OCI-LY7 (cell line): ENCODE measurements at regions of chr2 and their contacts with region 1.

Region 1: DNA sequence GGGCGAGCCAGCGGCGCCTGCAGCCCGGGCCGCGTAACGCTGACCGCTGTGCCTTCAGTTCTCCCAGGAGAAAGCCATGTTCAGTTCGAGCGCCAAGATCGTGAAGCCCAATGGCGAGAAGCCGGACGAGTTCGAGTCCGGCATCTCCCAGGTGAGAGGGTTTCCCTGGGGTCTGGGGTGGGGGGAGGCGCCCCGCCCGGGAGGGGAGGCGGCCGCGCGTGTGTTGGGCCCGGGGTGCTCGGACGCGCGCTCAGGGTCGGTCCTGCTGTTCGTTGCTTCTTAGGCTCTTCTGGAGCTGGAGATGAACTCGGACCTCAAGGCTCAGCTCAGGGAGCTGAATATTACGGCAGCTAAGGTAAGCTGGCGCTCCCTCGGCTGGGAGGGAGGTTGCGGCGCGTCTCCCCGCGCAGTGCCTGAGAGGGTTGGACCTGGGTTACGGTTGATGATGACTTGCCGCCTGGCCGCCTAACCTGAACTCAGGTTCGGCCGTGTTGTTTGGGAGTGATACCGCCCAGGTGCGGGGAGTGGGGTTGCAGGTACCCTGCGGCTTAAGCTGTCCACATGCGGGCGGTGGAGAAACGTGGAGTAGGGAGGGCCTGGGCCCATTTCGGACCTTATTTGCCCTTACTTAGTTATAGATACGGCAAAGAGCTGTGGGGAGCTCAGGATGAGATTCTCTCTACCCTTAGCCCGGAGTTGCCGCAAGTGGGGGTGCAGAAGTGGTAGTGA is 638 bp downstream of the RPS7 start:
- DNase-seq: peak; percentile 42
- H3K4me3 ChIP-seq: peak overlapping the region; percentile 82
- H3K27ac ChIP-seq: peak overlapping the region; percentile 66
- H3K4me1 ChIP-seq: peaks cover 49% of the 10 kb centered on the region
- CTCF ChIP-seq: no peak

Region 2: GRCh38 chr2:3034856-3035255 is 540.8 kb before region 1 on chr2:
- CTCF ChIA-PET with region 1: no interaction called
- POLR2A ChIA-PET with region 1: no interaction called
- intact Hi-C with region 1: no loop called
- DNase-seq: peak; percentile 11
- H3K4me3 ChIP-seq: no peak overlapping the region
- H3K27ac ChIP-seq: no peak overlapping the region
- H3K4me1 ChIP-seq: no peaks in the 10 kb centered on the region
- CTCF ChIP-seq: no peak

Region 3: DNA sequence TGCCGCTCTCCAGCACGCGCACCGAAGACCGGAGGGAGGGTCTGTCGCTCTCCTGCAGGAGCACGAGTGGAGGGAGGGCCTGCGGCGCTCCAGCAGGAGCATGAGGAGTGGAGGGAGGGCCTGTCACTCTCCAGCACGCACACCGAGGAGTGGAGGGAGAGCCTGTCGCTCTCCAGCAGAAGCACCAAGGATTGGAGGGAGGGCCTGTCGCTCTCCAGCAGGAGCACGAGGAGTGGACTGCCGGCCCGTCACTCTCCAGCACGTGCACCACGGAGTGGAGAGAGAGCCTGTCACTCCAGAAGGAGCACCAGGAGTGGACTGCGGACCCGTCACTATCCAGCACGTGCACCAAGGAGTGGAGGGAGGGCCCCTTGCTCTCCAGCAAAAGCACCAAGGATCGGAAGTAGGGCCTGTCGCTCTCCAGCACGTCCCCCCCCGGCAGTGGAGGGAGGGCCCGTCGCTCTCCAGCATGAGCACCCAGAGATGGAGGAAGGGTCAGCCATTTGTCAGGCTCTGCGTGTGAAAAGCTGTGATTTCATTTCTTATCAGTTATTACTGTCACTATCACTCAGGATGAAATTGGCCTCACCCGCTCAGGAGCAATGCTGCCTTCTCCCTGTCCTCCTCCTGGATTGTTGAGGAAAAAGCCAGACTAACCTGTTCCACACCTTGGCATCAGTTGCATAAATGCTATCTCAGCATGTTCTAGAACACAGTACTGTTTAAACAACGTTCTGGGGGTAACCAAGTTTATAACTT is 92.3 kb before region 1 on chr2:
- CTCF ChIA-PET with region 1: no interaction called
- POLR2A ChIA-PET with region 1: no interaction called
- intact Hi-C with region 1: no loop called
- DNase-seq: no peak
- H3K4me3 ChIP-seq: no peak overlapping the region
- H3K27ac ChIP-seq: no peak overlapping the region
- H3K4me1 ChIP-seq: peaks cover 23% of the 10 kb centered on the region
- CTCF ChIP-seq: no peak

Region 4: DNA sequence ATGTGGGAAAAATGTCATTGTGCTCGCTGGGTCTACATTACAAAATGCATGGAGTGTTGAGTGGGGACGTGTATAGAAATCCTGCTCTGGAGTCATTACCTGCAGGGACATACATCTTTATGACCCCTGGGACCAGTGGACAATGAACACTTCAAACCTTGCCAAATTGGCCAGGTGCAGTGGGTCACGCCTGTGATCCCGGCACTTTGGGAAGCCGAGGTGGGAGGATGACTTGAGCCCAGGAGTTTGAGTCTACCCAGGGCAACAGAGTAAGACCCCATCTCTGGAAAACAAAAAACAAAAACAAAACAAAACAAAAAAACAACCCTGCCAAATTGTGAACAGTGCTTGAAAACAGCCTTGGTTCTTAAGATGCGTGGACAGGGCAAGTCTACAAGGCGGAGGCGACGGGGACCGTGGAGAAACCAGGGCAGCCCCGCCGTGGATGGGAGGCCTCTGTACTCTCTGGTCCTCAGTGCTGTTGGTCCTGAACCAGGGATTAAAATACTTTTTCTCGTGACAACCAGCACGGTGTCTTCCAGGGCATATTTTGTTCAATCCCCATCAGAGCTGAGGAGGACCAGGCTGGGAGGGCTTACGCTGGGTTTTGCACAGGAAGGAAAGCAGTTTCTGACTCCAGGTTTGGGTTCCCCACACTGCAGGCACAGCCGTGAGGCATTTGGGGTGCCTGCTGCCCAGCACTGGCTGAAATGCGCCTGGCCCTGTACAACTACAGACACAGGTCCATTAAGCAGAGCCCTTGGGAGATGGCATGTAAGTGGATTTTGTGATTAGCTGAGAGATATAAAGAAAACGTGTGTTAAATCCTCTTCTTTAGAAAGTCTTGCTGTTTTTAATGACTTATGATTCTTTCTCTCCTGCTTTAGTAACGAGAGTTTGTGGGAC is 32.9 kb after region 1 on chr2:
- CTCF ChIA-PET with region 1: no interaction called
- POLR2A ChIA-PET with region 1: interaction called, 23 read pairs
- intact Hi-C with region 1: no loop called
- DNase-seq: peak; percentile 29
- H3K4me3 ChIP-seq: peak overlapping the region; percentile 45
- H3K27ac ChIP-seq: peak overlapping the region; percentile 82
- H3K4me1 ChIP-seq: peaks cover 52% of the 10 kb centered on the region
- CTCF ChIP-seq: no peak